Heart right ventricle (tissue), 16 donors: ENCODE measurements at regions of chr7 and their contacts with region 1.

Region 1: DNA sequence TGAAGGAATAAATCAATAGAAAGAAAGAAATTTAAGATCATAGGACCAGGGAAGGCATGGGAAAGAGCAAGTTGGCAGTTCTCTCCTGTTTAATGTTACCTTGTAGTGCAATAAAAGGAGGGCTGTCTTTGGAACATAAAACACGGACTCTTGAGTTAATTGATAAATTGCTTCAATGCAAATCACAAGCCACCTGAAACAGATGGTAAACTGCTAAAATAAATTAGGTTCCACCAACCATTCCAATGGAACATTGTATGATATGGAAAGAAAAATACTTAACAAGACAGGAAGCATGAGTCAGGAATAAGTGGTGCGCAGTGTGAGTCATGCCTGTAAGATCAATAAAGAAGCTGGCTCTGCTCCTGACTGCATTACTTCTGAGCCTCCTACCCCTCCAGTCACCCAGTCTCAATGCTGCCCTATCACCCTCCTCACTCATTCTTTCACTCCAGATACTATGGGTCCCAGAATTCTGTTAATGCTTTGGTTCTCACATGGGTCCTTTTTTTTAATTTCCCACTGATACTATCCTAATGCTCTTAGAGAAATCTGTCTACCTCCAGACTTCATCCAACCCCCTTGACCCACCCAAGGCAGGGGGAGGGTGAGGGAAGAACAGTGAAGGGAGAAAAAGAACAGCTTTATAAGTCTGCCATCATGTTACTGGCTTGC is 78.9 kb downstream of the LRRC17 start:
- DNase-seq: no peak
- ATAC-seq: peak in 2 of 8 donors; percentile 37 to 56
- H3K4me3 ChIP-seq: no peak overlapping the region
- H3K27ac ChIP-seq: peak overlapping the region in 4 of 10 donors; percentile 39 to 52 (median 49)
- H3K4me1 ChIP-seq: peaks cover 0 to 57% (median 13%) of the 10 kb centered on the region in 9 donors
- H3K27me3 ChIP-seq: no peaks in the 10 kb centered on the region
- CTCF ChIP-seq: no peak

Region 2: DNA sequence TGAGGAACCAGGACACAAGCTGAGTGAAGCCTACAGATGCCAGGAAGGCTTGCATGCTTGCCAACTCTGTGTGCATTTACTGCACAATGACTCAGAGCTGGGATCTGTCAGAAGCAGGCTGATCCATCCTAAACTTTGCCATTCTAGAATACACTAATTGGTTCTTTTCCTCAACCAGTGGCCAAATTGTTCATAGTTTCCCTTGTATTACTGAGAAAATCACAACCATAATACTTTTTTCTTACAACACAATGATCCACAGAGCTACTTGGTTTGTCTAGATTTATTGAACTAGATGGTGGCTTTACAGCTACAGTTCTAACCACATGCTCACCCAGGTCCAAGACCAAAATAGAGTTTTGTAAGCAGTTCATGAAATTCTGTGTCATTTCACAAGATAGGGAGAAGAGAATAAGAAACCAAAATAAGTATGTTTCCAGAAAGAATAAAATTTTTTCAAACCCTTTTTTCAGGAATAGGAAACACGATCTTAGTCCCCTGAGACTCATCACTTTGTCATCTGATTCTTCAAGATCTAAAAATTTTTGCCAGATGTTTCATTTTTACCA is 99.9 kb before region 1 on chr7:
- intact Hi-C with region 1: loop called in 1 of 10 experiments (anchors 5 kb)
- DNase-seq: peak in 1 of 2 donors; percentile 35
- ATAC-seq: peak in 6 of 8 donors; percentile 42 to 82 (median 64)
- H3K4me3 ChIP-seq: no peak overlapping the region
- H3K27ac ChIP-seq: peak overlapping the region in 6 of 10 donors; percentile 5 to 68 (median 20)
- H3K4me1 ChIP-seq: peaks cover 2 to 54% (median 35%) of the 10 kb centered on the region in 9 donors
- H3K27me3 ChIP-seq: no peaks in the 10 kb centered on the region
- CTCF ChIP-seq: no peak

Region 3: GRCh38 chr7:102912742-102913141 is 78.9 kb before region 1 on chr7 and contains the start of gene LRRC17:
- intact Hi-C with region 1: loop called in 1 of 10 experiments (anchors 10 kb)
- DNase-seq: peak in 1 of 2 donors; percentile 64
- ATAC-seq: peak in 7 of 8 donors; percentile 34 to 78 (median 60)
- H3K4me3 ChIP-seq: peak within 1 kb of the TSS in 9 of 10 donors; percentile 8 to 52 (median 46)
- H3K27ac ChIP-seq: peak within 1 kb of the TSS; percentile 0 to 72 (median 55)
- H3K4me1 ChIP-seq: peaks cover 0 to 28% (median 9%) of the 10 kb centered on the region in 9 donors
- H3K27me3 ChIP-seq: no peaks in the 10 kb centered on the region
- CTCF ChIP-seq: no peak
- total RNA-seq, gene LRRC17: 0.12 to 9.5 (median 2.6) TPM

Region 4: DNA sequence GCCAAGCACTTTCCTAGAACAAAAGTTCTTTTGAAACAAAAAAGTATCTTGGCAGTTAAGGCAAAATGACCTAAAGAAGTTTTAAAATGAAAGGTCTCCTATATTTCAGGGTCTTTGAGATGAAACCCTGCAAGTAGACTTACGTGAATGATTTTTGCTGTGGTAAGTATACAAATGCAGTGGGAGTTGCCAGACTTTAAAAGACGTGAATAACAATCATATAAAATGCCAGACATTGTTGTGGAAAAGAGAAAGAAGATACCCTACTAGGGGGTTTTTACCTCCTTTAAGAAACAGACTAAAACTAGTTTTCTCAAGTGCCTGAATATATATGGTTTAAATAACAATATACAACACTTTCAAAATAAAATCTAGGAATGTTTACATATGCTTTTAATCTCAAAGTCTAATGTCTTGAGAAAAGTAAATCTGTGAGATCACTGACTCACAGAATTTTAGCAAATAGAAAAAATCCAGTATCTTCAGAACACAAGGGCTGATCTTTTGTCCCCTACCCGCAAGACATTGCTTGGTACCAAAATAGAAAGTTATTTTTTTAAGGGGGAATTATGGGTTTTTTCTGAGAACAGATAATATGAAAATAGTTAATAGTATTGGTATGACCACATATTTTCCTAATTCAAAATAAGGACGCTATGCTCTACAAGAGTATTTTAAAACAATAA is 49.4 kb before region 1 on chr7:
- intact Hi-C with region 1: no loop called
- DNase-seq: no peak
- ATAC-seq: peak in 2 of 8 donors; percentile 4 to 53
- H3K4me3 ChIP-seq: no peak overlapping the region
- H3K27ac ChIP-seq: peak overlapping the region in 3 of 10 donors; percentile 2 to 32 (median 21)
- H3K4me1 ChIP-seq: peaks cover 3 to 46% (median 23%) of the 10 kb centered on the region in 9 donors
- H3K27me3 ChIP-seq: no peaks in the 10 kb centered on the region
- CTCF ChIP-seq: no peak

Region 5: GRCh38 chr7:103059471-103059870 is 67.8 kb after region 1 on chr7:
- intact Hi-C with region 1: loop called in 1 of 10 experiments (anchors 10 kb)
- DNase-seq: no peak
- ATAC-seq: no peak
- H3K4me3 ChIP-seq: no peak overlapping the region
- H3K27ac ChIP-seq: no peak overlapping the region
- H3K4me1 ChIP-seq: no peaks in the 10 kb centered on the region
- H3K27me3 ChIP-seq: no peaks in the 10 kb centered on the region
- CTCF ChIP-seq: no peak